Common myeloid progenitor, CD34-positive (primary cell): ENCODE measurements at regions of chr16 and their contacts with region 1.

Region 1: GRCh38 chr16:6667393-6667792 is 665.3 kb upstream of the RBFOX1 start:
- DNase-seq: no peak
- H3K4me3 ChIP-seq: no peak overlapping the region
- H3K27ac ChIP-seq: no peak overlapping the region
- H3K4me1 ChIP-seq: no peaks in the 10 kb centered on the region
- H3K27me3 ChIP-seq: peaks cover 0 to 15% (median 2%) of the 10 kb centered on the region in 5 experiments

Region 2: GRCh38 chr16:6682142-6682811 is 14.9 kb after region 1 on chr16:
- CTCF ChIA-PET with region 1: interaction called, 15 read pairs
- POLR2A ChIA-PET with region 1: no interaction called
- DNase-seq: peak; percentile 41 to 60 (median 53)
- H3K4me3 ChIP-seq: no peak overlapping the region
- H3K27ac ChIP-seq: no peak overlapping the region
- H3K4me1 ChIP-seq: peaks cover 0 to 7% (median 0%) of the 10 kb centered on the region in 4 experiments
- H3K27me3 ChIP-seq: peaks cover 0 to 3% (median 0%) of the 10 kb centered on the region in 5 experiments

Region 3: DNA sequence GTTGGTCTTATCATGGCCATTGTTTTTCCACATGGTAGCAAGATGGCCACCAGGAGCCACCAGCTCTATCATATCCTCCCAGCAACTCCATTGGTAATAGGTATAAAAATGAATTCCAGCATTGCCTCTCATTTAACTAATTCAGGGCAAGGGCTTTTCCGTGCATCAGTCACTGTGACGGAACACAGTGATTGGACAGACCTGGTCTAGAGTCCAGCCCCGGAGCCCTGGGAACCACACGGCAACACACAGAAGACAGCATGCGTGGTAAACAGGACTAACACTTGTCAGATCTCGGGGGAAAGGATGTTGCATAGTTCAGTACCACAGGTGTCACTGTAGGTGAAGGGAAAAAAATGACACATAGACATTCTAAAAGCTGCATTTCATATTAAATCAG is 27.2 kb after region 1 on chr16:
- CTCF ChIA-PET with region 1: no interaction called
- POLR2A ChIA-PET with region 1: no interaction called
- DNase-seq: no peak
- H3K4me3 ChIP-seq: no peak overlapping the region
- H3K27ac ChIP-seq: no peak overlapping the region
- H3K4me1 ChIP-seq: no peaks in the 10 kb centered on the region
- H3K27me3 ChIP-seq: peaks cover 0 to 4% (median 0%) of the 10 kb centered on the region in 5 experiments